ENCODE measurements at regions of chr3 and their contacts with region 1.

Region 1: GRCh38 chr3:56758539-56758981 is 43.2 kb downstream of the ARHGEF3 start:
- DNase-seq: peak; percentile 87
- ATAC-seq: peak; percentile 88
- H3K4me3 ChIP-seq: peak overlapping the region; percentile 49; the same call in 1 of the 2 replicates
- H3K27ac ChIP-seq: peak overlapping the region; percentile 62
- H3K4me1 ChIP-seq: peaks cover 42% of the 10 kb centered on the region
- H3K27me3 ChIP-seq: no peaks in the 10 kb centered on the region
- CTCF ChIP-seq: no peak
- EP300 ChIP-seq: peak; percentile 77 to 78
- POLR2A ChIP-seq: no peak
- RAD21 ChIP-seq: peak; percentile 11

Region 2: DNA sequence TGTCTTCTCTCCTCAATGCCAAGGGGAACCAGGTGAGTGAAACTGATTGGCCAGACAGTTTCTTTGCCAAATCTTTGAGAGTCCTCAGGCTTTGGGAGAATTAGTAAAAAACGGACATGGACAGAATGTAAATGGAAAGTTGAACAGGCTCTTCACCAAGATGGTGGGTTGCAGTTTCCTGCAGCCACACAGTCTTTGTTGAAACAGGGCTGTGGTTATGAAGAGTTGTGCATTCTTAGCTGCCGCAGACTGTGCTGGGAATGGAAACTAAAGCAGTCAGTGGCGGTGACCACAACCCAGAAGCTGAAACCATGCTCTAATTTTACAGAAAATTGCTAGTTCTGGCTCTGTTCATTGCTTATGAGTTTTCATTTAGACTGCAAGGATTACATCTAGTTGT is 33.4 kb before region 1 on chr3:
- CTCF ChIA-PET with region 1: interaction called, 35 read pairs
- POLR2A ChIA-PET with region 1: interaction called, 15 read pairs
- RAD21 ChIA-PET with region 1: interaction called, 56 read pairs
- SMC1A ChIA-PET with region 1: interaction called, 93 read pairs
- in situ Hi-C with region 1: no loop called
- intact Hi-C with region 1: loop called (anchors 1 kb)
- DNase-seq: peak; percentile 87
- ATAC-seq: peak; percentile 95
- H3K4me3 ChIP-seq: peak overlapping the region; percentile 34
- H3K27ac ChIP-seq: peak overlapping the region; percentile 70
- H3K4me1 ChIP-seq: peaks cover 26% of the 10 kb centered on the region
- H3K27me3 ChIP-seq: no peaks in the 10 kb centered on the region
- CTCF ChIP-seq: no peak
- EP300 ChIP-seq: peak in 1 of 2 experiments; percentile 78; a peak in 1 of 4 replicates
- POLR2A ChIP-seq: no peak
- RAD21 ChIP-seq: peak; percentile 15; the same call in 1 of the 2 replicates

Region 3: DNA sequence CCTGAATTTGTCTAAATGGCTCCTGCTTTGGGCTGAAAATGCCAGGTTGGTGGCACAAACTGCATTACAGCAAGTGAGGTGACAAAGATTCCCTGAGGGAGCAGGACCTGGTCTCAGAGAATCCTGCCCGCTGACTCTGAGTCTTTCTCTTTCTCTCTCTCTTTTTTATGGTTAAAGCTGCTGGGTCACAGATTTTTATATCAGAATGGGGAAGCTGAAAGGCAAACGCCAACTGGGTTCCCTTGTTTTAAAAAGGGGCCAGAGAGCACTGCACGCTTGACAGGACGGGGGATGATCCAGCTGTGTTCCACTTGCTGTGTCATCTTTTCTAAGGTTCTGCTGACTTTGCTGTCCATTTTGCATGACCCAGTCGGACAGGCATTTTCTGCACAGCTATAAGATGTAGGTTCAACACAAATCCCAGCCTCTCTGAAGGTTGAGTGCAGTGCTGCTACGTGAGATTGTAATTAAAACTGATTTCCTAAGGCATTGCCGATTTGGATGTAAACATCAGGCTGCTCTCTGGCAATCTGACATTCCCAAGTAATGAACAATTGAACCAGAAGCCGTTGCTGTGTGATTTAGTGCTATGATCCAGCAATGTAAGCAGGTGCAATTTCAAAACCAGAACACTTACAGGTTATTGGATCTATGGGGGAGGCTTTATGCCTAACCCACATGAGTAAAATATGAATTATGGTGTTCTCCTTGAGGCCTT is 17.4 kb after region 1 on chr3:
- CTCF ChIA-PET with region 1: interaction called, 7 read pairs
- POLR2A ChIA-PET with region 1: interaction called, 53 read pairs
- RAD21 ChIA-PET with region 1: interaction called, 14 read pairs
- SMC1A ChIA-PET with region 1: interaction called, 178 read pairs
- in situ Hi-C with region 1: no loop called
- intact Hi-C with region 1: no loop called
- DNase-seq: no peak
- ATAC-seq: no peak
- H3K4me3 ChIP-seq: no peak overlapping the region
- H3K27ac ChIP-seq: no peak overlapping the region
- H3K4me1 ChIP-seq: peaks cover 30% of the 10 kb centered on the region
- H3K27me3 ChIP-seq: no peaks in the 10 kb centered on the region
- CTCF ChIP-seq: no peak
- EP300 ChIP-seq: no peak
- POLR2A ChIP-seq: no peak
- RAD21 ChIP-seq: no peak

Region 4: GRCh38 chr3:56783644-56784447 is 25.3 kb after region 1 on chr3:
- CTCF ChIA-PET with region 1: interaction called, 37 read pairs
- POLR2A ChIA-PET with region 1: interaction called, 53 read pairs
- RAD21 ChIA-PET with region 1: interaction called, 62 read pairs
- SMC1A ChIA-PET with region 1: interaction called, 178 read pairs
- in situ Hi-C with region 1: no loop called
- intact Hi-C with region 1: no loop called
- DNase-seq: peak; percentile 93
- ATAC-seq: peak; percentile 92
- H3K4me3 ChIP-seq: peak overlapping the region; percentile 30; the same call in 1 of the 2 replicates
- H3K27ac ChIP-seq: peak overlapping the region; percentile 94
- H3K4me1 ChIP-seq: peaks cover 67% of the 10 kb centered on the region
- H3K27me3 ChIP-seq: no peaks in the 10 kb centered on the region
- CTCF ChIP-seq: no peak
- EP300 ChIP-seq: peak; percentile 76 to 84
- POLR2A ChIP-seq: peak; percentile 45; the same call in 1 of the 2 replicates
- RAD21 ChIP-seq: peak; percentile 25; the same call in 1 of the 2 replicates

Region 5: GRCh38 chr3:56790016-56790821 is 31.7 kb after region 1 on chr3:
- CTCF ChIA-PET with region 1: interaction called, 244 read pairs
- POLR2A ChIA-PET with region 1: interaction called, 53 read pairs
- RAD21 ChIA-PET with region 1: interaction called, 307 read pairs
- SMC1A ChIA-PET with region 1: interaction called, 383 read pairs
- in situ Hi-C with region 1: no loop called
- intact Hi-C with region 1: no loop called
- DNase-seq: no peak
- ATAC-seq: no peak
- H3K4me3 ChIP-seq: peak overlapping the region; percentile 1; the same call in 1 of the 2 replicates
- H3K27ac ChIP-seq: 0 out of 2 replicates have a peak overlapping the region, but pooled peaks have one; percentile 22
- H3K4me1 ChIP-seq: peaks cover 45% of the 10 kb centered on the region
- H3K27me3 ChIP-seq: no peaks in the 10 kb centered on the region
- CTCF ChIP-seq: no peak
- EP300 ChIP-seq: no peak
- POLR2A ChIP-seq: no peak
- RAD21 ChIP-seq: no peak

Region 6: GRCh38 chr3:56915966-56916586 is 157.5 kb after region 1 on chr3:
- CTCF ChIA-PET with region 1: no interaction called
- POLR2A ChIA-PET with region 1: interaction called, 5 read pairs
- RAD21 ChIA-PET with region 1: interaction called, 7 read pairs
- SMC1A ChIA-PET with region 1: interaction called, 3 read pairs
- in situ Hi-C with region 1: no loop called
- intact Hi-C with region 1: loop called (anchors 5 kb)
- DNase-seq: peak; percentile 32
- ATAC-seq: peak; percentile 72
- H3K4me3 ChIP-seq: peak overlapping the region; percentile 66
- H3K27ac ChIP-seq: peak overlapping the region; percentile 92
- H3K4me1 ChIP-seq: peaks cover 49% of the 10 kb centered on the region
- H3K27me3 ChIP-seq: no peaks in the 10 kb centered on the region
- CTCF ChIP-seq: no peak
- EP300 ChIP-seq: 0 out of 4 replicates have a peak, but pooled peaks of 1 of the 2 experiments have one; percentile 20
- POLR2A ChIP-seq: peak; percentile 56
- RAD21 ChIP-seq: no peak